AG04450 (cell line): ENCODE measurements at regions of chr16 and their contacts with region 1.

Region 1: DNA sequence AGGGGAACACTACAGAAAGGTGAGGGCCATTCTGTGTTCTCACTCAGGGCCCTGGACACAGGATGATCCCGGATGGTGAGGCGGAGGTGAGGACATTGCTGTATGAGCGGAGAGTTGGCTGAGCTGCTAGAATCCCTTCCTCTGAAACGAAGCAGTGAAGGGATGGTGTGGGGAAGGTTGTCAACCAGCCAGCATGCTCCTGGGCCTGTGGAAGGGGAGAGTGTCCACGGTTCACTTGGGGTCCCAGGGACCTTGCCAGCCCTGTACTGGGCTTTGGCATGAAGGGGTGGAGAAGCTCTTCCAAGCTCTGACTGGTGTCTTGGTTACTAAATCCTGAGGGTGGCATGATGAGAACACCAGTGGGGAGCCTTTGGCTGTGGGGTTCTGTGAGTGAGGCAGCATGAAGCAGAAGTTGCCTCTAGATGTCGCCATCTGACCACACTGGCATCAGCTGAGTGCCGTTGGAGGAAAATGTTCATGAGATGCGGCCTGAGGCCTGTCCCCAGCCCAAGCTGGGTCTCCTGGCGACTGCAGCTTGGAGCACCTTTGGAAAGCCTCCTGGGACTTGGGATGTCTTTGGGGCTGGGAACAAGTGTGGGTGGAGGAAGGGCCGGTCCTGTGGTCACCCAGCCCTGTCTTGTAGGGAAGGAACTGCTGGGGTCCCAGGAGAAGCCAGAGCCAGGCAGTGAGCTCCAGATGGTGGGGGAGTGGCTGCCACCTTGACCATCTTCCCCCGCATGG is 14.8 kb downstream of the PDP2 start:
- DNase-seq: no peak
- H3K4me3 ChIP-seq: no peak overlapping the region
- H3K27ac ChIP-seq: peak overlapping the region; percentile 11
- H3K27me3 ChIP-seq: no peaks in the 10 kb centered on the region
- CTCF ChIP-seq: peak; percentile 93

Region 2: DNA sequence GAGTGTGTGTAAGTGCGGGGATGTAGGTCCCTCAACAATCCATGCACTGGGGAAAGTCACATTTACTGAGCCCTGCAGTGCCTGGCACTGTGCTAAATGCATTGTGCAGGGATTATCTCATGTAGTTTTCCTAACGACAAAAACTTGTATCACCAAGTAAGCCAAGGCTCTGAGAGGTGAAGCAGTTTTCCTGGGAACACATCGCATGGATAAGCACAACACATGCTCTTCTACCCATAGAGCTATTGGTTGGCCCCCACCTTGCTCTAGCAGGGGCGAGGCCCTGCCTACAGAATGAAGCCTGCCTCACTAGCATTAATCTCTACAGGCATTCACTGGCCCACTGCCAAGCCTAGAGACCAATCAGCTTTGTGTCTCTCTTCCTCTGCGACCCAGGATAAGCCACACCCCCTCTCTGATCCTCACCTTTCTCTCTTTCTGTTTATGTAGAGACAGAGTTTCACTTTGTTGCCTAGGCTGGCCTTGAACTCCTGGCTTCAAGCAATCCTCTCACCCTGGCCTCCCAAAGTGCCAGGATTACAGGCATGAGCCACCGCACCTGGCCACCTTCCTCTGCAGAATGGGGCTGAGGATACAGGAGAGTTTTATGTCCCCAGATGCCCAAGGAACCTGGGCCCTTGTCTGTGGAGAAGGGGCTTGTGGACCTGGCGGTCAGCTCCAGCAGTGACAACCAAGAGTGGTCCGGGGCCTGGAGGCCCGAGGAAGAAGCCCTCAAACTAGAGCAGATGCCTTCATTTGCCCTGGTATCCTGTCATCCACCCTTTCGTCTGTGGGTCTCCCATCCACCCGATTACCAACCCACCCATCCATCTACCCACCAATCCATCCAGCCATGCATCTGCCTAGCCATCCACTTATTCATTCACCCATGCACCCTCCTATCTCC is 10.8 kb after region 1 on chr16:
- CTCF ChIA-PET with region 1: interaction called, 12 read pairs
- POLR2A ChIA-PET with region 1: interaction called, 3 read pairs
- DNase-seq: no peak
- H3K4me3 ChIP-seq: no peak overlapping the region
- H3K27ac ChIP-seq: no peak overlapping the region
- H3K27me3 ChIP-seq: no peaks in the 10 kb centered on the region
- CTCF ChIP-seq: no peak

Region 3: GRCh38 chr16:66928702-66929388 is 33.7 kb after region 1 on chr16:
- CTCF ChIA-PET with region 1: interaction called, 77 read pairs
- POLR2A ChIA-PET with region 1: interaction called, 4 read pairs
- DNase-seq: no peak
- H3K4me3 ChIP-seq: no peak overlapping the region
- H3K27ac ChIP-seq: no peak overlapping the region
- H3K27me3 ChIP-seq: peaks cover 8% of the 10 kb centered on the region
- CTCF ChIP-seq: peak; percentile 52

Region 4: DNA sequence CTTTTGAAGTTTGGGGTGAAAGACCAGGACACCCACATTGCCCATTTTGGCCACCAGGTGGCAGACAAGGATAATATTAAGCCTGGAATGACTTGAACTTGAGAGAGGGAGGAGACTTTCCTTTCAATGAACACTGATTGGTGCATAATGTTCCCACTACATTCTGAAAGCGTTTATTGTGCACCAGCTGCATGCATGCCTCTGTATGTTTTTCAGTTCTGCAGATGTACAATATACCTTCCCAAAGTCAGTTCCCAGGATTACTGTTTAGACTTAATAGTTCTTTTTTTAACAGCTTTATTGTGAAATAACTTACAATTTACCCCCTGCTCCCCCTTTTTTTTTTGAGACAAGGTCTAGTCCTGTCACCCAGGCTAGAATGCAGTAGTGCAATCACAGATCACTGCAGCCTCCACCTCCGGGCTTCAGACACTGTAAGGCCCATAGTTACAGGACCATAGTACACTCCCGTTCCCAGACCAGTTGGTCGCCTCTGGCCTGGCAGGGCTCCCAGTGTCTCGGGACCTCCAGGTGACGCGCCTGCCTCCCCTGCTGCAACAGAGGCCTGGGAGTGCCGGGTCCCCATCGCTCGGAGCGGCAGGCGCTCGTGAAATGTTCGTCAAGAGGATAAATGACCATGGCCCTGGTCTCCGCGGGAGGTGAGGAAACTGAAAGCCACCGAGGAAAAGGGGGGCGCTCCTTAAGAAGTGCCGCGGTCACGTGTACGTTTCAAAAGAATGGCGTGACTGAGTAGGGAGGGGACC is 52.4 kb after region 1 on chr16:
- CTCF ChIA-PET with region 1: interaction called, 13 read pairs
- POLR2A ChIA-PET with region 1: no interaction called
- DNase-seq: peak; percentile 63
- H3K4me3 ChIP-seq: peak overlapping the region; percentile 60
- H3K27ac ChIP-seq: no peak overlapping the region
- H3K27me3 ChIP-seq: peaks cover 17% of the 10 kb centered on the region
- CTCF ChIP-seq: peak; percentile 88

Region 5: GRCh38 chr16:67499106-67499505 is 604.0 kb after region 1 on chr16:
- CTCF ChIA-PET with region 1: no interaction called
- POLR2A ChIA-PET with region 1: no interaction called
- DNase-seq: no peak
- H3K4me3 ChIP-seq: no peak overlapping the region
- H3K27ac ChIP-seq: no peak overlapping the region
- H3K27me3 ChIP-seq: no peaks in the 10 kb centered on the region
- CTCF ChIP-seq: no peak